Naive thymus-derived CD8-positive, alpha-beta T cell (primary cell): ENCODE measurements at regions of chr21 and their contacts with region 1.

Region 1: DNA sequence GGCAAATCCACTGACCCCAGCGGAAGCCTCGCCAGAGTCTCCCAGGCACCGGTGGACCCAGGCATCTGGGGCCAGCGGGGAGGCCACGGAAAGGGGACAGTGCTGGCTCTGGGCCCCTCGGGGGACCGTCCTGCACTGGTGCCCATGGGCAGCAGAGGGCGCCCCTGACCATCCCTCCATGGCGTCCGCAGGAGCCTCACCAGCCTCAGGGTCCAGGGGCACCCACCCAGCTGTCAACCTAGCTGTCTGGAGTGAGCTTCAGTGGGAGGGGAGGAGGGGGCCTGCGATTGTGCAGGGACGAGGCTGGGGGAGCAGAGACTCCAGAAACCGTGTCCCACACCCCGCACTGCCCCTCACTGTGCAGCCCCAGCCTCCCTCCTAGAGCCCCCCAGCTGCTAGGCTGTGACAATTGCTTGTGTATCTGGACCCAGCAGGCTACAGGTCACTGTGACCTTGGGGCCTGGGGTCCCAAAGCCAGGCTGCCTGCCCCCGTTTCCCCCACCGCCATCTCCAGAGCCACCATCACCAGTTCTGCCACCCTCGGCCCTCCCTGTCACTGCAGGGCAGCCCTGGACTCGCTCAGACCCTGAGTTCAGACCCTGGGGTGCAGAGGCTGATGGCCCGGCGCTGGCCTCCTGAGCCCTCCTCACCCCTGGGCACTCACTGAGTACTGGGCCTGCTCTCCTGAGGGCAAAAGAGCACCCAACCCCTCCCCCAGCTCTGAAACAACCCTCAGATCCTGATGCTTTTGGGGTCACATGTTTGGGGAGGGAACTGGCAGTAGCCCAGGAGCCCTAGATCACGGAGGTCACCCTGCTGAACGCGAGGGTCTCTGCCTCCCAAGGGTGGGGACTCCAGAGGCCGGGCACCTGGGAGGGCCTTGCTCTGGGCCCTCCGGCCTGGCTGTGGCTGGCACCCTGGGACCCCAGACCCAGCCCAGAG is 10.6 kb upstream of the COL6A1 start:
- DNase-seq: peak in 8 of 10 donors; percentile 27 to 58 (median 54)
- ATAC-seq: peak; percentile 35 to 43
- H3K4me3 Mint-ChIP-seq: no peak overlapping the region
- H3K27ac Mint-ChIP-seq: no peak overlapping the region
- H3K4me1 Mint-ChIP-seq: peaks cover 2 to 20% (median 14%) of the 10 kb centered on the region in 4 donors
- H3K27me3 Mint-ChIP-seq: peaks cover 0 to 25% (median 10%) of the 10 kb centered on the region in 5 donors

Region 2: GRCh38 chr21:46097336-46098293 is 126.7 kb after region 1 on chr21 and contains the start of gene COL6A2:
- POLR2A ChIA-PET with region 1: interaction called, 10 read pairs
- DNase-seq: peak; percentile 18 to 68 (median 56)
- ATAC-seq: peak; percentile 83 to 87
- H3K4me3 Mint-ChIP-seq: peak within 1 kb of the TSS; percentile 60 to 85 (median 78)
- H3K27ac Mint-ChIP-seq: peak within 1 kb of the TSS; percentile 5 to 93 (median 60)
- H3K4me1 Mint-ChIP-seq: peaks cover 6 to 18% (median 13%) of the 10 kb centered on the region in 4 donors
- H3K27me3 Mint-ChIP-seq: peaks cover 0 to 25% (median 12%) of the 10 kb centered on the region in 5 donors
- polyA plus RNA-seq, gene COL6A2: 3.8 to 13.4 (median 8.8) TPM

Region 3: DNA sequence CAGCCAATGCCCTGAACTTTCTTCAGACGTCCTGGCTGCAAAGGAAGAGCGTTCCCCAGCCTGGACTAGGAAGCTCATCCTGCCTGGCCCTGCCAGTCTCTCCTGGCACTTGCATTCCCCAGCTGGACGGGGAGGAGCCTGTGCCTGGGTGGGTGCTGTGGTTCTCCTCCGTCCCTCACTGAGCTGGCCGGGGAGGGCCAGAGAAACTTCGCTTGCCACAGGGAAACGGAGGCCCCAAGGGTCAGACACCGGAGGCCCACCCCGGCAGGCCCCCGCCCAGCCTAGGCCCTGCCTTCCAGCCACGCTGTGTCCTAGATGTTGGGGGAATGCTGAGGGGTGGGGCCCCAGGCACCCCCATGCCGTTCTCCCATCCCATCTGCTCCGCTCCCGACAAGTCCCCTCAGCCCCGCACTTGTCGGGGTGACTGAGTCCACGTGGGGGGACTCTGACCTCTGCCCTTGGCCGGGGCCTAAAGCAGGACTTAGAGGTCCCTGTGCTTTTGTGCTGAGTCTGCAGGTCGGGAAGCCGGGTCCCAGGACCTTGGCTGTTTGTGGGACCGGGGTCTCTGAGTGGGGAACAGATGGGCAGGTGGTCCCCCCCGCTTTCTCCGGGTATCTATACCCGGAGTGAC is 179.7 kb after region 1 on chr21:
- POLR2A ChIA-PET with region 1: no interaction called
- DNase-seq: peak in 1 of 10 donors; percentile 61
- ATAC-seq: no peak
- H3K4me3 Mint-ChIP-seq: no peak overlapping the region
- H3K27ac Mint-ChIP-seq: no peak overlapping the region
- H3K4me1 Mint-ChIP-seq: peaks cover 0 to 2% (median 2%) of the 10 kb centered on the region in 4 donors
- H3K27me3 Mint-ChIP-seq: no peaks in the 10 kb centered on the region